ENCODE measurements at regions of chr9 and their contacts with region 1.

Region 1: DNA sequence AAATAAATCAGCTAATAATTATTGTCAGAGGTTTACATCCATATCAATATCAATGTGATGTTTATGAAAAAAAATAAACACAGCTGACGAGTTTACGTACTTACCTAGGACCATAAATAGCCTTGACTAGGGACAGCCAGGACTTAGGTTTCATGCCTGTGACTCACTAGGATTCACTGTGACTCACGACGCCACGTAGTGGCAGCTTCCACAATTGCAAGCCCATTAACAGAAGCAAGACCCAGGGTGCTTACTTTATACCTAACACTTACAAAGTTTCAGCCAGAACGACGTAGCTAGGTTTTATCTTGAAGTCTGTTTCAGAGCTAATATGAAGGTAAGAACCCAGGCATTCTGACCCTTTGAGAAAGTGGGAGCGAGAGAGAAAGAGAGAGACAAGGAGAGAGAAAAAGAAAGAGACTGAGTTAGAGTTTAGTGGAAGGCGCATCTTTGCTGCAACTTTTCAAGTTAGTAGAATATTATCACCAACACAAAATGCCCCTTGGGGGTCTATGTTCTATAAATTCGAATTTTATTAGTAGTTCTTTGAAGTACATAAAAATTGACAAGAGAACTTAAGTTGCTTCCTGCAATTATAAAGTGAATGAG is 191.2 kb downstream of the GNA14 start:
- DNase-seq: peak; percentile 93
- H3K4me3 ChIP-seq: no peak overlapping the region
- H3K27ac ChIP-seq: no peak overlapping the region
- H3K4me1 ChIP-seq: no peaks in the 10 kb centered on the region
- H3K27me3 ChIP-seq: no peaks in the 10 kb centered on the region
- CTCF ChIP-seq: peak; percentile 81 to 90
- POLR2A ChIP-seq: no peak

Region 2: DNA sequence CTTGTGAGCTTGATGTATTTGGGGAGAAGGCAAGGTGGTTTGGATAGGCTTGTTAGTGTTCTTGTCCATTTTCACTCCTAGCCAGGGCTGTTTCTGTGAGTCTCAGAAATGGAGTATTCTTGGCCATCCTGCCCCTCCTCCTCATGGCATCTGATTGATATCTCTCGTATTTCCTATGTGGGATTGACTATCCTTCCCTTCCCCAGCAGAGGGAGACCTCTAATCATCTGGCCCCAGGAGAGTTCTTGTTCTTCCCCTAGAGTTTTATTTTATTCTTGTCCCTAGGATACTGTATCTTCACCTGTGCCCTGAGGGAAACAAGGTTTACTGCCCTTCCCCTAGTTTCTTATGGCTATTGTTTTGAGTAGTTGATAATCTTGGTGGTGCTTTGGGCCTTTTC is 165.2 kb before region 1 on chr9:
- CTCF ChIA-PET with region 1: interaction called, 18 read pairs
- POLR2A ChIA-PET with region 1: no interaction called
- dilution Hi-C with region 1: no loop called
- intact Hi-C with region 1: loop called (anchors 2 kb)
- DNase-seq: peak; percentile 43
- H3K4me3 ChIP-seq: no peak overlapping the region
- H3K27ac ChIP-seq: no peak overlapping the region
- H3K4me1 ChIP-seq: no peaks in the 10 kb centered on the region
- H3K27me3 ChIP-seq: no peaks in the 10 kb centered on the region
- CTCF ChIP-seq: peak; percentile 47 to 48
- POLR2A ChIP-seq: no peak

Region 3: DNA sequence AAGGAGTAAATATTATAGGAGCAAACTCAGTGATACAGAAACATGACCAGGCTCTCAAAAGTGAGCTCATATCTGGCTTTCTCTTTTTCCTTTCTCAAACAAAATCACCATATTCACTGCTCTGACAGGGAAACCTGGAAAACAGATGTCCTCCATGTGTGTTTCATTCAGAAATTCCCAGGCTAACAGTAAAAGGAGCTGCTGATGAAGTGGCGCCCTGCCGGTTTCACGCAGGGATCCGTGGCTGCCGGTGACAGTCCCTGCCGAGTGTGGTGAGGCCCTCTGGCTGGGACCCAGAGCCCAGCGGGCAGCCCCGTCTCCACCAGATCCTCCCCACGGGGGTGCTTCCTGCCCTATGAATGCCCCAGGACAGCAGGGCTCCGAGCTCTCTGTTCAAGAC is 16.9 kb before region 1 on chr9:
- CTCF ChIA-PET with region 1: interaction called, 70 read pairs
- POLR2A ChIA-PET with region 1: no interaction called
- dilution Hi-C with region 1: no loop called
- intact Hi-C with region 1: no loop called
- DNase-seq: no peak
- H3K4me3 ChIP-seq: no peak overlapping the region
- H3K27ac ChIP-seq: no peak overlapping the region
- H3K4me1 ChIP-seq: no peaks in the 10 kb centered on the region
- H3K27me3 ChIP-seq: no peaks in the 10 kb centered on the region
- CTCF ChIP-seq: no peak
- POLR2A ChIP-seq: no peak

Region 4: GRCh38 chr9:77488439-77489126 is 31.6 kb after region 1 on chr9:
- CTCF ChIA-PET with region 1: interaction called, 44 read pairs
- POLR2A ChIA-PET with region 1: interaction called, 8 read pairs
- dilution Hi-C with region 1: no loop called
- intact Hi-C with region 1: loop called (anchors 1 kb)
- DNase-seq: peak; percentile 18
- H3K4me3 ChIP-seq: no peak overlapping the region
- H3K27ac ChIP-seq: no peak overlapping the region
- H3K4me1 ChIP-seq: no peaks in the 10 kb centered on the region
- H3K27me3 ChIP-seq: no peaks in the 10 kb centered on the region
- CTCF ChIP-seq: peak; percentile 23 to 41
- POLR2A ChIP-seq: no peak

Region 5: DNA sequence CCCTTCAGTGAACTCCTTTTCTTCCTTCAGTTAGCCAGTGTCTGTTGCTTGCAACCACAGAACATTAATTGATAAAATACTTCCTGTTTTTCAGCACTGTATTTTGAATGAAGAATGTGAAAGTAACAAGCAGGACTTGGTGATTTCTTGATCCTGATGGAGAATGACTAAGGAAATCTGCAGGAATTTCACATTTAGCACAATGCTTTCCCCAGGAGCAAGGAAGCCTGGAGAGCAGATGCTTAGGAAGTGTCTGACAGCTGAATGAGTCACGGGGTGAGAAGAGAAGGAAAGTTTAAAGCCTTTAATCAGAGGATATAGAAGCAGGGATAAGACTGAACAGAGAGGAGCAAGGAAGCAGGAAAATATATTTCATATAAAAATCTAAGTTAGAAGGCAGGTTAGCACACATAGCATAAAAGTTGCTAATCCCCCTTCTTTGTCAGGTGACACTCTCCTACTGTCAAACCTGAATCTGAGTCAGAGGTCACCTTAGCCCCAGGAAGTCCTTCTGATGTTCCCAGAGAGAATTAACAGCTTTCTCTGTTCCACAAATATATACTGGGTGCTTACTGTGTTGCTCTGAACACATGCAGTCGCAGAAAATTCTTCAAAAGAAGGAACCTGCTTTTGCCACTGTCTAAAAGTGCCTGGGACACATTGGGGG is 131.5 kb after region 1 on chr9:
- CTCF ChIA-PET with region 1: interaction called, 7 read pairs
- POLR2A ChIA-PET with region 1: no interaction called
- dilution Hi-C with region 1: no loop called
- intact Hi-C with region 1: loop called (anchors 10 kb)
- DNase-seq: peak; percentile 92
- H3K4me3 ChIP-seq: peak overlapping the region in 1 of 3 experiments; percentile 24
- H3K27ac ChIP-seq: peak overlapping the region; percentile 93
- H3K4me1 ChIP-seq: peaks cover 35% of the 10 kb centered on the region
- H3K27me3 ChIP-seq: no peaks in the 10 kb centered on the region
- CTCF ChIP-seq: no peak
- POLR2A ChIP-seq: no peak

Region 6: GRCh38 chr9:78121488-78121887 is 664.6 kb after region 1 on chr9:
- CTCF ChIA-PET with region 1: interaction called, 18 read pairs
- POLR2A ChIA-PET with region 1: no interaction called
- dilution Hi-C with region 1: no loop called
- intact Hi-C with region 1: loop called (anchors 1 kb)
- DNase-seq: peak; percentile 76
- H3K4me3 ChIP-seq: no peak overlapping the region
- H3K27ac ChIP-seq: no peak overlapping the region
- H3K4me1 ChIP-seq: no peaks in the 10 kb centered on the region
- H3K27me3 ChIP-seq: no peaks in the 10 kb centered on the region
- CTCF ChIP-seq: peak; percentile 64 to 65
- POLR2A ChIP-seq: no peak

Measured in endothelial cell of umbilical vein (primary cell).